ENCODE measurements at regions of chr22 and their contacts with region 1.

Region 1: DNA sequence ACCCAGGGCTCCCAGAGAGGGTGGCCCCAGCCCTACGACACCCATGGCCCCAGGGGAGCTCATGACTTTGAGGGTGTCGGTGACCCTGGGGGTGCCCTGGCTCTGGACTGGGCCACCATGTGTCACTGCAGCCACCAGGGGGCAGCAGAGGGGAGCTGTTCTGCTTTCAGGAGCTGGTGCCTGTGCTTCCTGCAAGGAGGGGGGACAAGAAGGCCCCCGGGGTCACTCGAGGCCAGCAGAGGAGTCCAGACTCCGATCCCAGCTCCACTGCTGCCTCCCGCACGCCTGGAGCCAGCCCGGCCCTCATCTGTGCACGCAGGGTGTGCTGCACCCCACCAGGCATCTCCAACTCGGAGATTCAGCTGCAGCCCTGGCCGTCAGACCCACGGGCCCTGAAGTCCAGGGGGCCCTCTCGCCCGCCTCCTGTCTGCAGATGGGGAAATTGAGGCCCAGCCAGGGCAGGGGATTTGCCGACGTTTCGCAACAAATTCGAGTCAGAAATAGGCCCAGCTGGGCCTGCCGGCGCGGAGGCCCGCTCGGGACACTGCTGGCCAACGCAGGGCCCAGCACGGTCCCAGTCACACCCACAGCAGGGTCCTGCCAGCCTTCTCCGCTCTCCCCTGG is 29.5 kb upstream of the WNT7B start:
- DNase-seq: no peak
- H3K4me3 ChIP-seq: 0 out of 2 replicates have a peak overlapping the region, but pooled peaks have one; percentile 17
- H3K27me3 ChIP-seq: no peaks in the 10 kb centered on the region
- CTCF ChIP-seq: peak; percentile 89

Region 2: GRCh38 chr22:45994491-45995404 is 11.7 kb before region 1 on chr22:
- CTCF ChIA-PET with region 1: interaction called, 60 read pairs
- POLR2A ChIA-PET with region 1: interaction called, 5 read pairs
- DNase-seq: no peak
- H3K4me3 ChIP-seq: no peak overlapping the region
- H3K27me3 ChIP-seq: peaks cover 2% of the 10 kb centered on the region; the same call in 1 of the 2 replicates
- CTCF ChIP-seq: peak; percentile 95

Region 3: GRCh38 chr22:46035742-46036557 is 29.5 kb after region 1 on chr22:
- CTCF ChIA-PET with region 1: interaction called, 13 read pairs
- POLR2A ChIA-PET with region 1: no interaction called
- DNase-seq: peak; percentile 95
- H3K4me3 ChIP-seq: peak overlapping the region; percentile 62
- H3K27me3 ChIP-seq: no peaks in the 10 kb centered on the region
- CTCF ChIP-seq: no peak

Region 4: GRCh38 chr22:46054091-46055073 is 47.9 kb after region 1 on chr22:
- CTCF ChIA-PET with region 1: interaction called, 19 read pairs
- POLR2A ChIA-PET with region 1: interaction called, 7 read pairs
- DNase-seq: no peak
- H3K4me3 ChIP-seq: peak overlapping the region; percentile 62
- H3K27me3 ChIP-seq: no peaks in the 10 kb centered on the region
- CTCF ChIP-seq: no peak

Region 5: GRCh38 chr22:46079861-46080821 is 73.7 kb after region 1 on chr22:
- CTCF ChIA-PET with region 1: interaction called, 77 read pairs
- POLR2A ChIA-PET with region 1: interaction called, 3 read pairs
- DNase-seq: no peak
- H3K4me3 ChIP-seq: peak overlapping the region; percentile 98
- H3K27me3 ChIP-seq: no peaks in the 10 kb centered on the region
- CTCF ChIP-seq: no peak

Region 6: GRCh38 chr22:46110215-46110614 is 103.7 kb after region 1 on chr22:
- CTCF ChIA-PET with region 1: interaction called, 160 read pairs
- POLR2A ChIA-PET with region 1: interaction called, 5 read pairs
- DNase-seq: no peak
- H3K4me3 ChIP-seq: no peak overlapping the region
- H3K27me3 ChIP-seq: no peaks in the 10 kb centered on the region
- CTCF ChIP-seq: no peak

Region 7: DNA sequence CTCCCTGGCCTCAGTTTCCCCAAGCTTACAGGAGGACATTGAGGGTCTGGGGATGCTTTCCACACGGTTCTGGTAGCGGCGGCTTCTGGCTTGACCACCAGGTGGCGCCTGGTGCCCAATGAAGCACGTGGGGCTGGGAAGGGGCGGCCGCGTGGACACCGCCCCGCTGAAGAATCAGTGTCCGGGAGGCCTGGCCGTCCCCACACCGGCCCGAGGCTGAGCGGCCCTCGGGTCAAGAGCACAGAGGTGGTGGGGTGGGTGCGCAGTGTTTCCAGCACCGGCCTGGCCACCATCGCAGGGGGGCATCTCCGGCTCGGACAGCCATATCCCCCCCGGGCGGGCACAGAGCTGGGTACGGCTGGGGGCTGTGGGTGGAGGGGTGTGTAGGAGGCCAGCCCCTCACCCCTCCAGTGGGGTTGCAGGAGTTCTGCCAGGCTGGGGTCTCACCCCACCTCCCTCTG is 116.0 kb after region 1 on chr22:
- CTCF ChIA-PET with region 1: interaction called, 160 read pairs
- POLR2A ChIA-PET with region 1: no interaction called
- DNase-seq: no peak
- H3K4me3 ChIP-seq: no peak overlapping the region
- H3K27me3 ChIP-seq: no peaks in the 10 kb centered on the region
- CTCF ChIP-seq: peak; percentile 92

Measured in BJ (cell line).